MCF 10A (cell line): ENCODE measurements at regions of chr10 and their contacts with region 1.

Region 1: DNA sequence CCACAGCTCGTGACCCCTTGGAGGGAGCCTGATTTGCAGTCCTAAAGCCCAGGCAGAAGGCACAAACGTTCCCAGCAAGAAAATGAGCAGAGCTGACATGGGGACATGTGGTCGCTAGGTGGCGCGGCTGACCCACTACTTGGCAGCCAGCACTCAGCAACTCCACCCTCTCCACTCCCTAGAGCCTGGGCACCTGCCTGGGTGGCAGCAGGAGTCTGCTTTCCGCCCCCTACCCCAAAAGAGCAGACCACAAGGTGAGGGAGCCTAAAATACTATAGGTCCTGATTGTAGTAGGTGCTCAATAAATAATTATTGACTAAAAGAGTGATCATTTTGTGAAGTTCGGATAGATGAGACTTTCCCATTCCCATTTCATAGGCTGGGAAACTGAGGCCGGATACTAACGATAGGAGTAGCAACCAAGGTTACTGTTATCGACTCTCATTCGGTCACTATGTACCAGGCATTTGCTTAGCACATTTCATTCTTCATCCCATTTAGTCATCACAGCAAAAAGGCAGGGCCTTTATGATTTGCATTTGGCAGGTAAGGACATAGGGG is 57.4 kb downstream of the NEUROG3 start:
- DNase-seq: peak; percentile 77
- H3K4me3 Mint-ChIP-seq: no peak overlapping the region
- H3K27ac Mint-ChIP-seq: no peak overlapping the region
- H3K4me1 Mint-ChIP-seq: no peaks in the 10 kb centered on the region
- H3K27me3 Mint-ChIP-seq: peaks cover 28% of the 10 kb centered on the region
- CTCF ChIP-seq: peak; percentile 90

Region 2: DNA sequence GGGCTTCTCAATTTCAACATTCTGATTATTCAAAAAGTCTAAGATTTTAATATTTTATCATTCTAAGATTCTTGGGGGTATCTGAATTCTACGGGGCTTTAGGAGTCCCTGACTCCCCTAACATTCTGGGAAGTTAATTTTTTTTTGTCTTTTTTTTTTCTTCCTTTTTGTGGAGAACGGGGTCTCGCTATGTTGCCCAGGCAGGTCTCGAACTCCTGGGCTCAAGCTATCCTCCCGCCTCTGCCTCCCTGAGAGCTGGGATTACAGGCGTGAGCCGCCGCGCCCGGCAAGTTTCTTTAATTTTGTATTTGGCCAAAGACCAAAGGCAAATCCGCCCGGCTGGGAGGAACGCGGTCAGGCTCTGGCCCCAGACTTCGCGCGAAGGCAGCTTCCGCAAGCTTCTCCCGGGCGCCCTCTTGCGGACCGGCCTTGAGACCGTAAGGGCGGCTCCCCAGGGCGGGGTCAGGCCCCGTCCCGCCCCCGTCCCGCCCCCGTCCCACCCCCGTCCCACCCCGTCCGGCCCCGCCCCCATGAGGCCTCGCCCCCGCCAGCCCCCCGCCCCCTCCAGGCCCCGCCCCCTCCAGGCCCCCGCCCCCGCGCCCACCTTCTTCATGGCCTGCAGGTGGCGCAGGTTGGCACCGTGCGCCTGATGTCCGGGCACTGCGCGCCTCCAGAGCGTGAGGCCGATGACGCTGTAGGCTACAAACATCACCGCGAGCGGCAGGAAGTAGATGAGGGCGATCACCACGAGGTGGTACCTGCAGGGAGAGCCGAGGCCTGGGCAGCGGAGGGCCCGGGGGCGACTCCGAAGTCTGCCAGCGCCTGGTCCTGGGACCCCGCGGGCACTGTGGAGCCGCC is 107.2 kb before region 1 on chr10:
- CTCF ChIA-PET with region 1: interaction called, 10 read pairs
- POLR2A ChIA-PET with region 1: no interaction called
- intact Hi-C with region 1: no loop called
- DNase-seq: peak; percentile 93
- H3K4me3 Mint-ChIP-seq: peak overlapping the region; percentile 65
- H3K27ac Mint-ChIP-seq: peak overlapping the region; percentile 40
- H3K4me1 Mint-ChIP-seq: peaks cover 16% of the 10 kb centered on the region
- H3K27me3 Mint-ChIP-seq: no peaks in the 10 kb centered on the region
- CTCF ChIP-seq: peak; percentile 76

Region 3: GRCh38 chr10:69527961-69528360 is 12.2 kb after region 1 on chr10:
- CTCF ChIA-PET with region 1: interaction called, 4 read pairs
- POLR2A ChIA-PET with region 1: no interaction called
- intact Hi-C with region 1: loop called (anchors 1 kb)
- DNase-seq: no peak
- H3K4me3 Mint-ChIP-seq: no peak overlapping the region
- H3K27ac Mint-ChIP-seq: no peak overlapping the region
- H3K4me1 Mint-ChIP-seq: no peaks in the 10 kb centered on the region
- H3K27me3 Mint-ChIP-seq: peaks cover 21% of the 10 kb centered on the region
- CTCF ChIP-seq: no peak

Region 4: DNA sequence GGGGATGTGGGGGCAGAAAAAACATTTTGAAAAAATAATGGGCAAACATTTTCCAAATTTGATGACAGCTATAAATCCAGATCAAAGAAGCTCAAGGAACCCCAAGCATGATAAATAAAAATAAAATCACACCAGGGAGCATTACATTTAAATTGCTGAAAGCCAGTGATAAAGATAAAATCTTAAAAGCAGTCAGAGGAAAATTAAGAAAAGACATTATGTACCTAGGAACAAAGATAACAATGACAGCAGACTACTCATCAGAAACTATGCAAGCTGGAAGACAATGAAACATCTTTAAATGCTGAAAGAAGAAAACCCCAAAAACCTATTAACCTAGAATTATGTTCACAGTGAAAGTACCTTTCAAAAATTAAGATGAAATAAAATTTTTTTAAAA is 34.2 kb after region 1 on chr10:
- CTCF ChIA-PET with region 1: no interaction called
- POLR2A ChIA-PET with region 1: no interaction called
- intact Hi-C with region 1: no loop called
- DNase-seq: no peak
- H3K4me3 Mint-ChIP-seq: no peak overlapping the region
- H3K27ac Mint-ChIP-seq: no peak overlapping the region
- H3K4me1 Mint-ChIP-seq: no peaks in the 10 kb centered on the region
- H3K27me3 Mint-ChIP-seq: peaks cover 47% of the 10 kb centered on the region
- CTCF ChIP-seq: no peak

Region 5: DNA sequence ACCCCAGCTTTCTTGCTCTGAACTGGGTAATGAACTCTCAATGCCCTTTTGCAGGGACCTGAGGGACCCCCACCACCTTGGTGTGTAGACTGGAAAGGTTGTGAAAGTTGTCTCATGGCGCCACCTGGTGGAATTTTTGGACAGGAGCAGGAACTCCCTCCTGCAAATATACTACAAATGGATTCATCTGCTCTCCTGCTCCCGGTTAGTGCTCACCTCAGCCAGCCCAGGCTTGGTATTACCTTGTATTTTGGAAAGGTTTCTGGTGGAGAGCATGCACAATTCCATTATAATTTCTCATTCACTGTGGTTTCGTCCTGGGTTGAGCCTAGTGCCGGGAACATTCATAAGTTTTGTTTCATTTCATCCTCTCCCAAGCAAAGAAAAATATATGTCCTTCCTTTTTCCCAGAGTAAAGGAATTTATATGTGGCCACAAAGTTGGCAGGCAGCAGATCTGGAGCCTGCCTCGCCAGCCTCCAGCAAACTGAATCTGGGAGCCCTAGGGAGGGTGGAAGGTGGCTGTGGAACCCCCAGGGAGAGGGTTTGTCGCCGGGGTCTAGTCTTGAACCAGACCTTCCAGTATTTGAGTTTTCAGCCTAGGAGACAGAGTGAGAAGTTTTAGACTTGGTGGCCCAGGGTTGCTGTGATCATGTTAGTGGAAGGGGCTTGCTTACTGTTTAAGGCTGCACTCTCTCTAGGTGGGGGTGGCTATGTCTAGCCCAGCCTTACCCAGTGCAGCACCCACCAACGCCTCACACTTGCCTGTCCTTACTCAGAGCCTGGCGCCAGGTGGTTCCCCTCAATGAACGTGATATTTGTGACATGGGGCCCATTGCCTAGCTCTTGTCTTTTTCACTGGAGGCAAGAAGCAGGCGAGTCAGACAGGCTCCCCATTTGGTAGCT is 123.8 kb after region 1 on chr10:
- CTCF ChIA-PET with region 1: interaction called, 248 read pairs
- POLR2A ChIA-PET with region 1: interaction called, 6 read pairs
- intact Hi-C with region 1: loop called (anchors 1 kb)
- DNase-seq: peak; percentile 77
- H3K4me3 Mint-ChIP-seq: no peak overlapping the region
- H3K27ac Mint-ChIP-seq: no peak overlapping the region
- H3K4me1 Mint-ChIP-seq: peaks cover 23% of the 10 kb centered on the region
- H3K27me3 Mint-ChIP-seq: no peaks in the 10 kb centered on the region
- CTCF ChIP-seq: peak; percentile 84

Region 6: GRCh38 chr10:69800109-69800508 is 284.3 kb after region 1 on chr10:
- CTCF ChIA-PET with region 1: no interaction called
- POLR2A ChIA-PET with region 1: no interaction called
- intact Hi-C with region 1: loop called (anchors 10 kb)
- DNase-seq: peak; percentile 75
- H3K4me3 Mint-ChIP-seq: no peak overlapping the region
- H3K27ac Mint-ChIP-seq: no peak overlapping the region
- H3K4me1 Mint-ChIP-seq: peaks cover 18% of the 10 kb centered on the region
- H3K27me3 Mint-ChIP-seq: no peaks in the 10 kb centered on the region
- CTCF ChIP-seq: peak; percentile 56